ENCODE measurements at regions of chr13 and their contacts with region 1.

Region 1: GRCh38 chr13:31067416-31068118 is 94.1 kb downstream of the HSPH1 start:
- DNase-seq: no peak
- H3K4me3 Mint-ChIP-seq: no peak overlapping the region
- H3K27ac Mint-ChIP-seq: no peak overlapping the region
- H3K4me1 Mint-ChIP-seq: no peaks in the 10 kb centered on the region
- H3K27me3 Mint-ChIP-seq: peaks cover 2% of the 10 kb centered on the region

Region 2: DNA sequence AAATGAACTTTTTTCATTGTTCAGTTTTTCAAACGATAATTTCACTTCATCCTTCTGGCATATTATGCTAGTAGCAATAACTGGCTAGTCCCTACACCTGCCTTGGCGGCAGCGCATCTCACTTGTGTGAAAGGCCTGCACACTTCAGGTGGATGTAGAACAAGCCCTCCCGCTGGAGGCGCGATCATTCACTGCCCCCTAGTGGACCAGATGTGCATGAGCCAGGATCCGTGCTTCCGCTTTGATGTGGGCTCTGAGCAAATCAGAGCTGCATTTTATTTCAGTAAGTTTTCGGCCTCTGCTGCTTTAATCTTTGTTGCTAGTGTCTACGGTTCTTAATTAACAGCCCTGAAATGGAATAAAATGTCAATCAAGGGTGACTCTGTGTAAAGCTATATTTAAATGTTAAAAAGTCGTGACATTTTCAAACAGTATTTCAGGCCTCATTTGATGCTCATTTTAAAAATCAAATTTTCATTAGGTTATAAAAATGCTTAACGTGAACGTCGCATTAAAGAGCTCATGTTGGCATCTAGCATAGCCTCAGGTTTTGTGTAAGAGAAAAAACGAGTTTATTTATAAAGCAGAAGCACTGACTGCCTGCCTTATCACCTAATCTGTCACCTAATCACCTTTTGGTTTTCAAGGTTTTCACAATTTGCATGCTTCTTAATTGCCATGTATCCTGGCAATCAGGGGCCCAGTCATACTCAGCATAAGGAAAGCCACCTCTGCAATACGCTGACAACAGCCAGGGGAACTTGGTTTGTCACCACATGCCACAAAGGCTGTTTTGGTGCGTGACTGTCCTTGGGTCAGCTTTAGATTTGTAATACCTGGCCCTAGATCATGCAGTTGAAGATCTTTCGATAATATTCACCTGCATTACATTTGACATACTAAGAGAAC is 22.9 kb before region 1 on chr13:
- CTCF ChIA-PET with region 1: interaction called, 11 read pairs
- POLR2A ChIA-PET with region 1: interaction called, 4 read pairs
- DNase-seq: peak; percentile 88
- H3K4me3 Mint-ChIP-seq: no peak overlapping the region
- H3K27ac Mint-ChIP-seq: peak overlapping the region; percentile 85
- H3K4me1 Mint-ChIP-seq: peaks cover 55% of the 10 kb centered on the region
- H3K27me3 Mint-ChIP-seq: peaks cover 13% of the 10 kb centered on the region

Region 3: GRCh38 chr13:31056644-31057271 is 10.8 kb before region 1 on chr13:
- CTCF ChIA-PET with region 1: interaction called, 11 read pairs
- POLR2A ChIA-PET with region 1: no interaction called
- DNase-seq: no peak
- H3K4me3 Mint-ChIP-seq: no peak overlapping the region
- H3K27ac Mint-ChIP-seq: no peak overlapping the region
- H3K4me1 Mint-ChIP-seq: peaks cover under 1% of the 10 kb centered on the region
- H3K27me3 Mint-ChIP-seq: peaks cover 2% of the 10 kb centered on the region

Region 4: GRCh38 chr13:31090991-31091531 is 23.5 kb after region 1 on chr13:
- CTCF ChIA-PET with region 1: no interaction called
- POLR2A ChIA-PET with region 1: no interaction called
- DNase-seq: no peak
- H3K4me3 Mint-ChIP-seq: no peak overlapping the region
- H3K27ac Mint-ChIP-seq: no peak overlapping the region
- H3K4me1 Mint-ChIP-seq: peaks cover 3% of the 10 kb centered on the region
- H3K27me3 Mint-ChIP-seq: peaks cover 13% of the 10 kb centered on the region

Measured in activated CD4-positive, alpha-beta T cell treated with anti-CD3 and anti-CD28 coated beads, Interleukin-2, amount 10 ng/mL, durations not matched to agents 7 days and 5 days (primary cell).